ENCODE measurements at regions of chr10 and their contacts with region 1.

Region 1: DNA sequence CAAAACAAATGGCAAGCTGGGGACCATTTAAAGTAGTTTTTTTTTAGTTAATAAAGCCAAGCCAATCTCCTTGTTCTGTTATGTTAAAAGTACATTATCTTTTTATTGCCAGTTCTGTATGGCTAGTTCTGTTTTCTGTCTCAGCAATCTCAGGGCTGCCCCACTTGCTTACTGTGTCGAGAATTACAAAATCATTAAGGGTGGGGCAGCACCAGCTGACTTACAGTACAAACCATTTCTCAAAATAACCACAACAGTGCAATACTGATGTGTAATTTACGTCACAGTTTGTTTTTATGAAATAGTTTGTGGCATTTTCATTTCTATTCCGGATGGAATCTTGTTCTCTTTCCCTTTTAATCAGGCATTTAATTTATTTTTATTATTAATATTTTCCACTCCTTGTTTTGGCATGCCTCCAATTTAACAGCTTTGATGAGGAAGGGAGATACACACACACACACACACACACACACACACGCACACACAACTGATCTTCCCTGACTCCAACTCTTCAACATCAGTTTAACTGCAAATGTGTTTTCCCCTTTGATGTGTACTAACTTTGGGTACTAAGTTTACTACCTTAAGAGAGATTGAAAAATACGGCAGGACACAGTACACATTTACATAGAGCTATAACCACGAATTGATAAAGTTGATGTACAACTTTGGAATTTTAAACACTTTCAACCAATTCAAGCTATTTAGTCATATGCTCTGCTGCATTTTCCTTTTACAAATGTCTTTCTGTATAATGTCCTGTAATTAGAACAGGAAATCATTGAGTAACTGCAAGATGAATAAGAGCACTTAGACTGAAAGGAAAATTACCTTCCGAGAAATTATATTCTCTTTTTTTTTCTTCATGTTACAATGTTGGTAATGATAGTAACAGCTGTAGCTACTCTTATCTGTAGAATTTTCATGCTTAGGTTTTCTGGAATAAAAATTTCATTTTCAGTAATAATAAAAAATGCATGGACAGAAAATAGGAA is 91.5 kb downstream of the ARID5B start:
- DNase-seq: peak; percentile 43 to 84
- ATAC-seq: peak; percentile 72 to 93 (median 84)
- H3K4me3 ChIP-seq: peak overlapping the region; percentile 14
- H3K4me3 Mint-ChIP-seq: peak overlapping the region; percentile 92
- H3K27ac ChIP-seq: peak overlapping the region; percentile 87
- H3K27ac Mint-ChIP-seq: peak overlapping the region; percentile 93 to 96
- H3K4me1 ChIP-seq: peaks cover 13% of the 10 kb centered on the region
- H3K4me1 Mint-ChIP-seq: peaks cover 50 to 57% of the 10 kb centered on the region in 2 donors
- H3K27me3 ChIP-seq: no peaks in the 10 kb centered on the region
- H3K27me3 Mint-ChIP-seq: no peaks in the 10 kb centered on the region
- CTCF ChIP-seq: no peak

Region 2: GRCh38 chr10:61943674-61944410 is 49.1 kb before region 1 on chr10:
- intact Hi-C with region 1: loop called (anchors 1 kb)
- DNase-seq: peak in 1 of 2 donors; percentile 68
- ATAC-seq: peak; percentile 47 to 66 (median 57)
- H3K4me3 ChIP-seq: peak overlapping the region; percentile 30
- H3K4me3 Mint-ChIP-seq: peak overlapping the region; percentile 86
- H3K27ac ChIP-seq: peak overlapping the region; percentile 93
- H3K27ac Mint-ChIP-seq: peak overlapping the region; percentile 93 to 95
- H3K4me1 ChIP-seq: peaks cover 11% of the 10 kb centered on the region
- H3K4me1 Mint-ChIP-seq: peaks cover 48 to 53% of the 10 kb centered on the region in 2 donors
- H3K27me3 ChIP-seq: no peaks in the 10 kb centered on the region
- H3K27me3 Mint-ChIP-seq: no peaks in the 10 kb centered on the region
- CTCF ChIP-seq: peak; percentile 22

Measured in natural killer cell (primary cell).